ENCODE measurements at regions of chr9 and their contacts with region 1.

Region 1: DNA sequence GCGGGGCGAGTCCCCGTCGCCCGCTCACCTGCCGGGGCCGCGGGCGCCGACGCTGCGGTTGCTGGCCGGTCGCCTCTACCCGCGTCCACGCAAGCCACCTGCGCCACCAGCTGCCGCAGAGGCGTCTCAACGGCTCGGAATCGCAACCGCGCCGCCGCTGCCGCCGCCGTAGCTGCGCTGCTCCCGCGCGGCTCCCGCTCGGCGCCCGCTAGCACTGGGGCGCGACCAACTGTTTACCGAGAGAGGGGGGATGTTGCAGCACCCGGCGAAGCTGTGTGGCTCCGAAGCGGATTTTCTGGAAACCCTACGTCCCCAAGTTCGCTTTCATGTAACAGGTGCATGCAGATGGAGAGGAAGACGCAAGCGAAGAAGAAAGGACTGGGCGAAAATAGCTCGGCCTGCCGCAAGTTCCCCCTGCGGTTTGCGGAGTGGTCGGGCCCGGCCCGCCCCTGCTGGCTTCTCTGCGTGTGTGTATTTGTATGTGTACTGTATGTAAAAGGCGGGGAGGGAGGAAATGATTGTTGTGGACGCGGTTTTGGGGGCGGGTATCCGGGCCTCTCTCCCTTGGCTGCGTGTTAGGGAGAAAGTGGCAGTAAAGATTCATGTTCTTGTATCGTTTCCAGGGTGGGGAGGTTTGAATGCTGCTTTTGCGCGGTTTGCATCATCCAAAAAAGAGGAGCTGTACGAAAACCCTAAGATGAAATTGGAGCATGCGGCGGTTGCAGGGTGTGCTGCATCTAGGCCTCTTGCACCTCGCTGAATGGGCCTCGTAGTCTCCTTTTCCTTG is at the start of gene PSIP1:
- DNase-seq: peak; percentile 93 to 95 (median 94)
- H3K4me3 ChIP-seq: peak within 1 kb of the TSS; percentile 53 to 67
- H3K4me3 Mint-ChIP-seq: peak within 1 kb of the TSS; percentile 90 to 98 (median 96)
- H3K27ac ChIP-seq: peak within 1 kb of the TSS; percentile 83
- H3K27ac Mint-ChIP-seq: peak within 1 kb of the TSS; percentile 94 to 100 (median 99)
- H3K4me1 ChIP-seq: peaks cover 51% of the 10 kb centered on the region
- H3K4me1 Mint-ChIP-seq: peaks cover 43 to 60% (median 53%) of the 10 kb centered on the region in 4 donors
- H3K27me3 ChIP-seq: no peaks in the 10 kb centered on the region
- H3K27me3 Mint-ChIP-seq: no peaks in the 10 kb centered on the region
- total RNA-seq, gene PSIP1: 181 to 188 TPM

Region 2: GRCh38 chr9:15211160-15211814 is 299.7 kb before region 1 on chr9:
- CTCF ChIA-PET with region 1: no interaction called
- POLR2A ChIA-PET with region 1: no interaction called
- intact Hi-C with region 1: no loop called
- DNase-seq: peak; percentile 46 to 63 (median 59)
- H3K4me3 ChIP-seq: no peak overlapping the region
- H3K4me3 Mint-ChIP-seq: no peak overlapping the region
- H3K27ac ChIP-seq: no peak overlapping the region
- H3K27ac Mint-ChIP-seq: peak overlapping the region in 1 of 7 donors; percentile 48
- H3K4me1 ChIP-seq: no peaks in the 10 kb centered on the region
- H3K4me1 Mint-ChIP-seq: peaks cover 4 to 10% (median 5%) of the 10 kb centered on the region in 4 donors
- H3K27me3 ChIP-seq: no peaks in the 10 kb centered on the region
- H3K27me3 Mint-ChIP-seq: no peaks in the 10 kb centered on the region

Region 3: GRCh38 chr9:15306757-15307534 is 204.0 kb before region 1 on chr9 and contains the start of gene TTC39B:
- CTCF ChIA-PET with region 1: interaction called, 5 read pairs
- POLR2A ChIA-PET with region 1: interaction called, 26 read pairs
- intact Hi-C with region 1: loop called (anchors 5 kb)
- DNase-seq: peak; percentile 66 to 80 (median 69)
- H3K4me3 ChIP-seq: peak within 1 kb of the TSS; percentile 72
- H3K4me3 Mint-ChIP-seq: peak within 1 kb of the TSS; percentile 94 to 99 (median 98)
- H3K27ac ChIP-seq: peak within 1 kb of the TSS; percentile 74
- H3K27ac Mint-ChIP-seq: peak within 1 kb of the TSS; percentile 74 to 97 (median 96)
- H3K4me1 ChIP-seq: peaks cover 48% of the 10 kb centered on the region
- H3K4me1 Mint-ChIP-seq: peaks cover 38 to 62% (median 50%) of the 10 kb centered on the region in 4 donors
- H3K27me3 ChIP-seq: no peaks in the 10 kb centered on the region
- H3K27me3 Mint-ChIP-seq: no peaks in the 10 kb centered on the region
- total RNA-seq, gene TTC39B: 29.0 to 30.2 TPM

Region 4: GRCh38 chr9:15461601-15462000 is 49.4 kb before region 1 on chr9:
- CTCF ChIA-PET with region 1: no interaction called
- POLR2A ChIA-PET with region 1: interaction called, 11 read pairs
- intact Hi-C with region 1: no loop called
- DNase-seq: no peak
- H3K4me3 ChIP-seq: no peak overlapping the region
- H3K4me3 Mint-ChIP-seq: no peak overlapping the region
- H3K27ac ChIP-seq: no peak overlapping the region
- H3K27ac Mint-ChIP-seq: no peak overlapping the region
- H3K4me1 ChIP-seq: no peaks in the 10 kb centered on the region
- H3K4me1 Mint-ChIP-seq: peaks cover 0 to 2% (median under 1%) of the 10 kb centered on the region in 4 donors
- H3K27me3 ChIP-seq: no peaks in the 10 kb centered on the region
- H3K27me3 Mint-ChIP-seq: no peaks in the 10 kb centered on the region

Region 5: DNA sequence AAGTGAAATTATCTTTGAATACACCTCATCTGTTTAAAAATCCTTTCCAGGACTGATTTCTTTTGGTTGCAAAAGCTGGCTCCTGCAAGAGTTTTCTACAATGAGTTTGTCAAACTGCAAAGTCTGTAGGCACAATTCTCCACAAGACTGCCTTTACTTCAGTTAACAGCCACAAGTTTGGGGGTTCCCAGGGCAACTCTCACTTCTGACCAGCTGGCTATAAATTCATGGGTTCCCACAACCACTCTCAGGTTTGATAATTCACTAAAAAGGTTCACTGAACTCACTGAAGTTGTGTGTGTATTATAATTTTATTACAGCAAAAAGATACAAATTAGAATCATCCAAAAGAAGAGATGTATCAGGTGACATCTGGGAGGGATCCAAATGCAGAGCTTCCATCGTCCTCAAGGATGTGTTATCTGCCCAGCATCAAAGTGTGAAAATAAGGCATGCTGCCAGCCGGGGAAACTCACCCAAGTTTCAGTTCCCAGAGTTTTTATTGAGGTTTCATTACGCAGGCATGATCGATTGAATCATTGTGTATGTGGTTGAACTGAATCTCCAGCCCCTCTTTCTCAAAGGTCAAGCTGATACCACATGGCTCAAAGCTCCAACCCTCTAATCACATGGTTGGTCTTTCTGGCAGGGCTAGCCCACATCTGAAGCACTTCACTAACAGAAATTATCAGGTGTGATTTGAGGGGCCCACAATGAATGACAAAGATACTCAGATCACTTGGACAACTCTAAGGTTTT is 18.8 kb after region 1 on chr9:
- CTCF ChIA-PET with region 1: interaction called, 7 read pairs
- POLR2A ChIA-PET with region 1: interaction called, 9 read pairs
- intact Hi-C with region 1: loop called (anchors 1 kb)
- DNase-seq: no peak
- H3K4me3 ChIP-seq: no peak overlapping the region
- H3K4me3 Mint-ChIP-seq: no peak overlapping the region
- H3K27ac ChIP-seq: no peak overlapping the region
- H3K27ac Mint-ChIP-seq: no peak overlapping the region
- H3K4me1 ChIP-seq: no peaks in the 10 kb centered on the region
- H3K4me1 Mint-ChIP-seq: peaks cover 0 to 6% (median 4%) of the 10 kb centered on the region in 4 donors
- H3K27me3 ChIP-seq: no peaks in the 10 kb centered on the region
- H3K27me3 Mint-ChIP-seq: no peaks in the 10 kb centered on the region

Region 6: DNA sequence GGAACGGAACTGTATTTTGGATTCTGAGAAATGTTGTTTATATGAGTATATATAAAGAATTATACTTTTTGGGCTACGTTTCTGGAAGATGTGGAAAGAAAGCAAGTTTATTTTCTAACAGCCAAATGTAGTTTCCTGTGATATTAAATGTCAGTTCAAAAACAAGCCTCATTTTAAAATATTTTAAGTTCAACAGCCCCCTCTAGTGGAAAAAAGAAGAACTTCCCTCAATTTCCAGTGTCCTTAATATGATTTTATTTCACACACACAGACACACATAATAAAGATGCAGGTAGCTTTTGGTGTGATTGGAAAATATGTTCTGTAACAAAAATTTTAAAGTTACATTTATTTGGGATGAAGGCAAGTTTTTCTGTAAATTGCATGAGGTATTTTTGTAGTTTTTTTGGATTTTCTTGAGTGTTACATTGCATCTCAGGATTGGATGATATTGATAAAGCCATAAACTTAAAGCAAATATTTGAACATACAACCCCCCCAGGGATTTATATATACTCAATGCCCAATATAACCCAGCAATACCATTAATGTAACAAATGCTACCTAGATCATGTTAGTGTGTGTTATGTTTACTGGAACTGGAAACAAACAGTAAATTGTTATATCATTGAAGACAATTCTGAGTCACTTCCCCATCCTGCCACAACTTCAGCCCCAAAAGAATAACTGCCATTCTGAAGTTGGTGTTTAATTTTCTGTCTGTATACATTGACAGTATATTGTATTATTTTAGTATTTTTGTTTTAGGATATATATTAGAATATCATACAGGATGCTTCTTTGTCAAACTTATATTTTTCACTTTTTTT is 95.9 kb after region 1 on chr9:
- CTCF ChIA-PET with region 1: interaction called, 4 read pairs
- POLR2A ChIA-PET with region 1: no interaction called
- intact Hi-C with region 1: loop called (anchors 2 kb)
- DNase-seq: peak in 4 of 5 donors; percentile 54 to 66 (median 60)
- H3K4me3 ChIP-seq: no peak overlapping the region
- H3K4me3 Mint-ChIP-seq: no peak overlapping the region
- H3K27ac ChIP-seq: no peak overlapping the region
- H3K27ac Mint-ChIP-seq: no peak overlapping the region
- H3K4me1 ChIP-seq: no peaks in the 10 kb centered on the region
- H3K4me1 Mint-ChIP-seq: no peaks in the 10 kb centered on the region
- H3K27me3 ChIP-seq: no peaks in the 10 kb centered on the region
- H3K27me3 Mint-ChIP-seq: no peaks in the 10 kb centered on the region

Measured in CD4-positive, alpha-beta memory T cell (primary cell).